ENCODE measurements at regions of chr1 and their contacts with region 1.

Region 1: GRCh38 chr1:152034646-152035405 is 2.0 kb downstream of the S100A11 start:
- DNase-seq: peak; percentile 78 to 90
- H3K4me3 ChIP-seq: peak overlapping the region; percentile 89
- H3K27ac ChIP-seq: peak overlapping the region; percentile 97
- H3K4me1 ChIP-seq: peaks cover 66% of the 10 kb centered on the region
- H3K27me3 ChIP-seq: no peaks in the 10 kb centered on the region
- CTCF ChIP-seq: peak; percentile 94

Region 2: DNA sequence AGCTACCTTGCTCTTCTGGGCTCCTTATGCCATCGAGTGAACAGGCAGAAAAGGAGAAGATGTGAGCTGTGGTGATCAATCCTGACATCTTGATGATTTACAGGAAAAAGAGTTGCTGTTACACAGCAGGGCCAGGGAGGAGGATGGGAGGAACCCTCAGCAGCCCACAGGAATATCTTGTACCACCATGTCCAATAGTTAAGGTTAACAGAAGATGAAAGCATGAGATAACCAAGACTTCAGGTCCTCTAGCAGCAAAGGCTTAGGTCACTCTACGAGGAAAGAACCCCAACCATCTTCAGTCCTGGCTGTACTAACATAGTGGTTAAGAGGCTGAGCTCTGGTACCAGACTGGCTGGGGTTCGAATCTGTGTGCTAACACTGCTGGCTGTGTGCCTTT is 650.2 kb before region 1 on chr1:
- CTCF ChIA-PET with region 1: no interaction called
- POLR2A ChIA-PET with region 1: no interaction called
- intact Hi-C with region 1: no loop called
- DNase-seq: no peak
- H3K4me3 ChIP-seq: no peak overlapping the region
- H3K27ac ChIP-seq: no peak overlapping the region
- H3K4me1 ChIP-seq: no peaks in the 10 kb centered on the region
- H3K27me3 ChIP-seq: no peaks in the 10 kb centered on the region
- CTCF ChIP-seq: no peak

Region 3: DNA sequence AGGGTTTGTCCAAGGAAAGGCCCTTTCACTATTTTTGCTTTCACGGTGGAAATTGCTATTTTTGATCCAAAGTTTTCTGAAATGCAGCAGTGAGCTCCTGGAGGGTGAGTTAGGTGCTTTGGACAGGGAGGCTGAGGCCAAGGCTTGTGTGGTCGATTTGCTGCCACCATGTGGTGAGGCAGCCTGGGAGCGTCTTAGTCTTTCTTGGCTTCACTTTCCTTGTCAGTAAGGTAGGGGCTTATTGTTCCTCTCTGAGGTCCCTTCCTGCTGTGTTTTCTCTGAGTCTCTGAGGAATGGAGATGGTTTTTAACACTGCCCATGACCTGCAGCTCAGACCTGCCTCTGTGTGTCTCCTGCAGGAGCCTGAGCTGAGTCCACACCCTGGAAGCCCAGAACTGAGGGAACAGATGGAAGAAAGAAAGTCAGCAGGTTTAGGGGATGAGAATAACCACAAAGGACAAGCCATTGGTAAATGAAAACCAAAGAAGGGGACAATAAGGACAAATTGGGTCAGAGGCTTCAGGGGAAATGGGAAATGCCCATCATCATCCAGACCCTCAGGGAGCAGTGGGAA is 21.1 kb before region 1 on chr1:
- CTCF ChIA-PET with region 1: interaction called, 3 read pairs
- POLR2A ChIA-PET with region 1: interaction called, 5 read pairs
- intact Hi-C with region 1: loop called (anchors 2 kb)
- DNase-seq: no peak
- H3K4me3 ChIP-seq: no peak overlapping the region
- H3K27ac ChIP-seq: no peak overlapping the region
- H3K4me1 ChIP-seq: peaks cover 13% of the 10 kb centered on the region; the same call in 1 of the 2 replicates
- H3K27me3 ChIP-seq: no peaks in the 10 kb centered on the region
- CTCF ChIP-seq: peak; percentile 74

Region 4: GRCh38 chr1:152024158-152024557 is 10.7 kb before region 1 on chr1:
- CTCF ChIA-PET with region 1: no interaction called
- POLR2A ChIA-PET with region 1: interaction called, 5 read pairs
- intact Hi-C with region 1: loop called (anchors 1 kb)
- DNase-seq: peak; percentile 73 to 96
- H3K4me3 ChIP-seq: peak overlapping the region; percentile 11; the same call in 1 of the 2 replicates
- H3K27ac ChIP-seq: peak overlapping the region; percentile 94
- H3K4me1 ChIP-seq: peaks cover 63% of the 10 kb centered on the region
- H3K27me3 ChIP-seq: no peaks in the 10 kb centered on the region
- CTCF ChIP-seq: no peak

Measured in PC-9 (cell line).